Activated CD4-positive, alpha-beta memory T cell treated with anti-CD3 and anti-CD28 coated beads, Interleukin-2, amount 10 ng/mL, durations not matched to agents 7 days and 5 days (primary cell): ENCODE measurements at regions of chr12 and their contacts with region 1.

Region 1: DNA sequence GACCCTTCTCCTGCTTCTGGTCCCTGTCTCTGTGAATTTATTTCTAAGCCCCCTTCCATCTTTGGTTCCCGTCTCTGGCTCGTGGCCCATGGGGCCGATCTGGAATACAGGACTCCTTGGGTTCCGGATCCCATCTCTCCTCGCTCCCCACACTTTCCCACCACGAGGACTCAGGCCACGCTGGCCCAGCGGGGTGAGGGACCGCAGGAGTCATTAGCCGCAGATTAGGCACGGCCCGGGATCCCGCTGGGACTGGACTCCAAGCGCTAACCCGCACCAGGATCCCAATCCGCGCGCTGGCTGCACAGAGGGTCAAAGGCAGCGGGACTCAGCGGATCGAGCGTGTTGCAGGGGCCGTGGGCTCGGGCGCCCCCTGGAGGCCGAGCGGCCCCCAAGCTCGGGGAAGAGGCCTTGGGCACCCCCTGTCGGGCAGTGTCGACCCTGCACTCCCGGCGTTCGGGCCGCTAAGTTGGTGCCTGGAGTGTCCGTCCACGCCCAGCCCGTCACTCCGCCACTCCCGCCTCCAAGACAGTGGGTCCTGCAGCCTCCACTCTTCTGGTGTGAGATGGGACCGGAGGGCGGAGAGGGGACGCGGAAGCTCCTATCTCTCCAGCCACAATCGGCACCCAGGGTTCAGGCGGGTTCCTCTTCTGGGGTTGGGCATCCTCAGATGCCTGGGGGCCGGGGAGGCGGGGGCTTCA is 9.5 kb downstream of the SHMT2 start:
- DNase-seq: peak; percentile 92
- H3K4me3 Mint-ChIP-seq: peak overlapping the region; percentile 95
- H3K27ac Mint-ChIP-seq: peak overlapping the region; percentile 83
- H3K4me1 Mint-ChIP-seq: peaks cover 79% of the 10 kb centered on the region
- H3K27me3 Mint-ChIP-seq: peaks cover 48% of the 10 kb centered on the region

Region 2: DNA sequence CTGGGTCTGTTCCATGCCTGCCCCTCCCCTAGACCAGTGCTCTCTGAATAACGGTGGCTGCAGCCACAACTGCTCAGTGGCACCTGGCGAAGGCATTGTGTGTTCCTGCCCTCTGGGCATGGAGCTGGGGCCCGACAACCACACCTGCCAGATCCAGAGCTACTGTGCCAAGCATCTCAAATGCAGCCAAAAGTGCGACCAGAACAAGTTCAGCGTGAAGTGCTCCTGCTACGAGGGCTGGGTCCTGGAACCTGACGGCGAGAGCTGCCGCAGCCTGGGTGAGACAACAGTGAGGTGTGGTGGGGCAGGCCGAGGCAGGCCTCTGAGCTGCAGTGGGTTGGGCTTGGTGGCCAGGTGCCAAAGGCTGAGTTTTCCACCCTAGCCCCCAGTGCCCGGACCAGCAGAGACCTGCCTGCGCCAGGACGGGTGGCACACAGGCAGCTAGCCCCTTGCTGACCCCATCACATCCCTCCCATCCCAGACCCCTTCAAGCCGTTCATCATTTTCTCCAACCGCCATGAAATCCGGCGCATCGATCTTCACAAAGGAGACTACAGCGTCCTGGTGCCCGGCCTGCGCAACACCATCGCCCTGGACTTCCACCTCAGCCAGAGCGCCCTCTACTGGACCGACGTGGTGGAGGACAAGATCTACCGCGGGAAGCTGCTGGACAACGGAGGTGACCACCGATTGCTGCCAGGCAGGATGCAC is 63.4 kb before region 1 on chr12:
- CTCF ChIA-PET with region 1: no interaction called
- POLR2A ChIA-PET with region 1: no interaction called
- DNase-seq: peak; percentile 48
- H3K4me3 Mint-ChIP-seq: no peak overlapping the region
- H3K27ac Mint-ChIP-seq: no peak overlapping the region
- H3K4me1 Mint-ChIP-seq: no peaks in the 10 kb centered on the region
- H3K27me3 Mint-ChIP-seq: no peaks in the 10 kb centered on the region

Region 3: DNA sequence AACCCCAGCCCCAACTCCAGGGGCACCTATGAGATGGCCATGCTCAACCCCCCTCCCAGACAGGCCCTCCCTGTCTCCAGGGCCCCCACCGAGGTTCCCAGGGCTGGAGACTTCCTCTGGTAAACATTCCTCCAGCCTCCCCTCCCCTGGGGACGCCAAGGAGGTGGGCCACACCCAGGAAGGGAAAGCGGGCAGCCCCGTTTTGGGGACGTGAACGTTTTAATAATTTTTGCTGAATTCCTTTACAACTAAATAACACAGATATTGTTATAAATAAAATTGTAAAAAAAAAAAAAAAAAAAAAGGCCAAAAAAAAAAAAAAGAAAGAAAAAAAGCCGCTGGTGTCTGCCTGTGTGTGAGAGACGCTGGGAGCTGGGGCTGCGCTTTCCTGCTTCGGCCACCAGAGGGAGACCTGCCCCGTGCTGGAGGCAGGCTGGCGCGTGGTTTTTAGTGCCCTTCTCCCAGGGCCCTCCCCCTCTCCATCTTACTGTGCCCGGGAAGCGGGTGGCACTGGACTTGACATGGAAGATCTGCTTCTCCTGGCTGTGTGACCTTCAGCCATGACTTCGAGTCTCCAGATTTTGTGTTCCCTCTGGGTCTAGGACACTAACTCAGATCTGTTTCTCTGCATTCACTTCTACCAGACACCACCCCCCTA is 25.8 kb before region 1 on chr12:
- CTCF ChIA-PET with region 1: interaction called, 253 read pairs
- POLR2A ChIA-PET with region 1: interaction called, 28 read pairs
- DNase-seq: peak; percentile 87
- H3K4me3 Mint-ChIP-seq: no peak overlapping the region
- H3K27ac Mint-ChIP-seq: peak overlapping the region; percentile 3
- H3K4me1 Mint-ChIP-seq: peaks cover 39% of the 10 kb centered on the region
- H3K27me3 Mint-ChIP-seq: peaks cover 41% of the 10 kb centered on the region

Region 4: DNA sequence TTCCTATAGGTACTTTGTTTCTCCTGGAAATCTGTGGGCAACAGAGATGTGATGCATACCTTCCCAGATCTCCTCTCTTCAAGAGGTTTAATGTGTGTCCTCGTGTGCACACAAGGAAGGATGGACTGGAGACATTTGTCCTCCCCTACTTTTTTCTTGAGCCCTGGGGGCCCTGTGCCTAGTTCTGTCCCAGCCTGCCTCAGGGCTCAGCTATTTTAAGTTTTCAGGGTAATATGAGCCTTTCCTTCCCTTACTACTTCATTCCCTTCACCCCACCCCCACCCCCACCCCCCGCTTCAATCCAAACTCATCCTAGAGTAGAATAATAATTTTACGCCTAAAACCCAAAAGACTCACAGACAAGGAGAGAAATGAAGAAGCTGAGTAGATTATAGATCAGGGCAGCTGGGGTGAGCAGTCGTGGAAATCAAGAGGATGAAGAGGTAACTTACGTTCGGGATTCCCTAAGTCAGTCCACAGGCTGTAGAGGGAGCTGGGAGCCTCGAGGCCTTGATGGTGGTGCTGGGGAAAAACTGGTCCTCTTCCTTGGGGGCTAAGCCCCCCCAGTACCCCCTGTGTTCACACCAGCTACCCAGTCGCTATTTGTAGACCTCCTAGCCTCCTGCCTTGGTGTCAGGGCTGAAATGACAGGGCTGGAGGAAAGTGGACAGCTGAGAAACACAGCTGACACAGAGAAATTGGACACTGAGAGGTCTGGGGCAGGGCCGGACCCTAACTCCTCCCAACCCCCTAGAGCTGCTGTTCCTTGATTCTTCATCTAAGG is 11.7 kb after region 1 on chr12 and contains the start of gene STAC3:
- CTCF ChIA-PET with region 1: interaction called, 14 read pairs
- POLR2A ChIA-PET with region 1: interaction called, 8 read pairs
- DNase-seq: no peak
- H3K4me3 Mint-ChIP-seq: no peak within 1 kb of the TSS
- H3K27ac Mint-ChIP-seq: no peak within 1 kb of the TSS
- H3K4me1 Mint-ChIP-seq: peaks cover 7% of the 10 kb centered on the region
- H3K27me3 Mint-ChIP-seq: no peaks in the 10 kb centered on the region
- total RNA-seq, gene STAC3: 4.1 to 4.5 TPM